ENCODE measurements at regions of chr6 and their contacts with region 1.

Region 1: DNA sequence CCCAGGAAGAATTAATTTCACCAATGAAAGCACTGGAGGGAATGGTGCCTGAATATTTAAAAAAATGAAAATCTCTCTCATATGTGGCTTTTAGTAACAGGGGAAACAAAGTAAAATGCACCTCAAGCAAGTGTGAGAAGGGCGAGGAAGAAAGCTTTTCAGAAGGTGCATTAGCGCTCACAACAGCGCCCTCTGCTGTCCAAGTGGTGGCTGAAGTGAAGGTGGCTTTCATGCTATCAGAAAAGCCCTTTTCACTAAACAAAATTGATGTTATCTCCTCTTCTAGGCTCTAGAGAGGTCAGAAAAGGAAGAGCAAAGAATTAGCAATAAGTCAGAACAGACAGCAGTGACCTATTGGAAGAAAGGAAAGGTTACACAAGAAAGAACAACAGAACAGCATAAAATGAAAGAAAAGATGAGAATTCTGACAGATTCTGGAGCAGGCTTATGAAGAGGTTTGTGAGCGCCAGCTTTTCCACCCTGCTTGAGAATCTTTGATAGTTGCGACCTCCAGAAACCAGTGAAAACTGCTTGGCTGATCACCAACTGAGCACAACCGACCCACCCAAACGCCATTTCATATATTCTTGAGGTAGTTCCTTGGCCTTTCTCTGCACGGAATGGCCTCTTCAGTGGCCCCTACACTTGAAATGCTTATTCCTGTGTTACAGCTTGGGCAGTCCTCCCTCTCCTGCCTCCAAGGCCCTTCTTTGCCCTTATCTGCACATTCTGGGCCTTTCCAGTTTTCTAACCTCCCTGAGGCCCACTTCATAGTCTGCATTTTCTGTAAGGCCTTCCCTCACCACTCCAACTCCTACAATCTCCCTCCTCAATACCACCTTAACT is 45.3 kb downstream of the SMLR1 start:
- DNase-seq: peak; percentile 81
- ATAC-seq: peak; percentile 37

Region 2: DNA sequence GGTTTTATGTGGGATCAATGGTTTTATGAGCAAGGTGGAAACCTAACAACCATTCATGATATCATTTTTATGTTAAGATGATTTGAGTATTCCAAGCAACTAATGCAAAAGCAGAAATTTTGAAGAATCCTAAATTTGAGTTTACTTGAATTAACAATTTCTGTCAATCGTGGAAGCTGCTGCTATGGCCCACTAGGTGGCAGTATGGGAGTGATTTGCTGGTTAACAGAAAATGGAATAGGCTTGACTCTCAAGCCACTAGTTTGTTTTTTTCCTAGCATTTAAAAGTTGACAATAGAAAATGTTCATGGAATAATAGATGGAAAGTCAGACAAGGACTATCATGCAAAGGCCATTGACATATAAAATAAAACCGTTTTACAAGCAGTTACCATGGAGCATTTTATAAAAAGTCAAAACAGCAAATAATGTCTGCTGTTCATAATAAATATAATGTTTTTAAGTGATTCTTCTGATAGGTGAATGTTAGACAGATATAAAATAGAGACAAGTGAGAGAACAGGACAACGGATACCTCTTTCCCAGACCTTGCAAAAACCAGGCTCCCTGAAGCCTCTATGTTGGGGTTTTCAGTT is 549.7 kb before region 1 on chr6:
- intact Hi-C with region 1: loop called (anchors 10 kb)
- DNase-seq: no peak
- ATAC-seq: no peak

Region 3: GRCh38 chr6:131029626-131030297 is 157.3 kb after region 1 on chr6:
- intact Hi-C with region 1: no loop called
- DNase-seq: no peak
- ATAC-seq: peak; percentile 65

Region 4: DNA sequence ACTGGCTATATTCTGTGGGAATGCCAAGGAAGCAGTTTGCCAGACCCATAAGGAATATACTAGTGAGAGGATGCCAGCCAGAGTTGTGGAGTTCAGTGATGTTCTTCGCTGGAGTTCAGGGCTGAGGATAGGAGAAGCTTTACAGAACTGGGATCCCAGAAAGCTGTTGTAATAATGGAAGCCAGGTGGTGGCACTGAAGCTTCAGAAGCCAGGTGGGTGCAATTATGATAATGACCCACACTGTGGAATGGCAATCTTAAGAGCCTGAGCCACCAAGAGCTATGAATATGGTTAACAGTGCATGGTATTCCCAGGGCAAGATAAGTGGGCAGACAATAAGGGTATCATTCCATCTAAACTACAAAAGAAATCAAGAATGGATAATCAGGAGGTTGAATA is 910.3 kb after region 1 on chr6:
- intact Hi-C with region 1: no loop called
- DNase-seq: no peak
- ATAC-seq: peak; percentile 35

Measured in left ventricle myocardium superior (tissue), 1 donor.